ENCODE measurements at regions of chr16 and their contacts with region 1.

Region 1: DNA sequence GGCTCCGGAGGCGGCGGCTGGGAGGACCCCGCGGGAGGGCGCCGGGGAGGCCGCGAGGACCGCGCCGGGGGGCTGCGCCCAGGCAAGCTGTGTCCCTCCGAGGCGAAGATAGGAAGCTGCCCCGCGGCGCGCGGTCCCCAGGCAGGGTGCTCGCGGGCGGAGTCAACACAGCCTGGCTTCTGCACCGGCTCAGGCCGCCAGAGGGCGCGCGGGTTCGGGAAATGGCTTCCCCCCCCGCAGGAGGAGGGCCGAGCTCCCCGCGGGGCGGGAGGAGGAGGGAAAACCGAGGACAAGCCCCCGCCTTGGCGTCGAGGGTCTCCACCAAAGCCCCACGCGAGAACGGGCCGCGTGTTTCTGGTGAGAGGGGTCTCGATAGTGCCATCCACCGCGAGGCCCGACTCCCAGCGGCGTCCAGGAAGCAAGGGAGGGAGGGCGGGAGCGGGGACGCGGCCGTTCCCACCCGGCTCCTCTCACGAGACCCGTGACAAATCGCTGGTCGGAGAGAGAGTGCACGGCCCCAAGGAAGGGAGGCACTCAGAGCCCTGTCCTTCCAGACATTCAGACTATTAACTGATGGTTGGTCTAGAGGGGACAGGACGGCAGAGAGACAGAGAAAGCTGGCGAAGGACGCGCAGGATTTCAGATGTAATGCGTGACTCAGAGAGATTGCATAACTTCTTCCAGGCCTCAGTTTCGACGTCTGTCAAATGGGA is 64.4 kb upstream of the DNAJA2 start:
- DNase-seq: peak; percentile 97
- H3K4me3 Mint-ChIP-seq: peak overlapping the region; percentile 82
- H3K27ac Mint-ChIP-seq: no peak overlapping the region
- H3K4me1 Mint-ChIP-seq: peaks cover 4% of the 10 kb centered on the region
- H3K27me3 Mint-ChIP-seq: peaks cover 14% of the 10 kb centered on the region

Region 2: GRCh38 chr16:46822270-46822669 is 215.6 kb before region 1 on chr16:
- intact Hi-C with region 1: no loop called
- DNase-seq: peak; percentile 65
- H3K4me3 Mint-ChIP-seq: no peak overlapping the region
- H3K27ac Mint-ChIP-seq: no peak overlapping the region
- H3K4me1 Mint-ChIP-seq: peaks cover 26% of the 10 kb centered on the region
- H3K27me3 Mint-ChIP-seq: no peaks in the 10 kb centered on the region

Region 3: DNA sequence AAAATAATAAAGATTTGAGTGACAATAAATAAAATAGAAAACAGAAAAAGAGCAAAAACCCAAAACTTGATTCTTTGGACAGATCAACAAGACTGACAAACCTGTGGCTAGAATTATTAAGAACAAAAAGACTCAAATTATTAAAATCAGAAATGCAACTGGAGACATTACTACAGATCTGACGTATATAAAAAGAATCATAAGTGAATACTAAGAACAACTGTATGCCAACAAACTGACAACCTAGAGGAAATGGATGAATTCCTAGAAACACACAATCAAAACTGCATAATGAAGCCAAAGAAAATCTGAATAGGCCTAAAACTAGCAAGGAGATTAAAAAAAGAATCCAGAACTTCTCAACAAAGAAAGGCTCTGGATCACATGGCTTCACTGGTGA is 58.4 kb after region 1 on chr16:
- intact Hi-C with region 1: no loop called
- DNase-seq: no peak
- H3K4me3 Mint-ChIP-seq: no peak overlapping the region
- H3K27ac Mint-ChIP-seq: no peak overlapping the region
- H3K4me1 Mint-ChIP-seq: peaks cover 4% of the 10 kb centered on the region
- H3K27me3 Mint-ChIP-seq: no peaks in the 10 kb centered on the region

Region 4: GRCh38 chr16:48054881-48055601 is 1017.1 kb after region 1 on chr16:
- intact Hi-C with region 1: loop called (anchors 1 kb)
- DNase-seq: peak; percentile 80
- H3K4me3 Mint-ChIP-seq: no peak overlapping the region
- H3K27ac Mint-ChIP-seq: no peak overlapping the region
- H3K4me1 Mint-ChIP-seq: no peaks in the 10 kb centered on the region
- H3K27me3 Mint-ChIP-seq: peaks cover 16% of the 10 kb centered on the region